Activated CD8-positive, alpha-beta T cell treated with anti-CD3 and anti-CD28 coated beads, Interleukin-2, amount 10 ng/mL, durations not matched to agents 7 days and 5 days (primary cell): ENCODE measurements at regions of chr5 and their contacts with region 1.

Region 1: GRCh38 chr5:150161242-150162141 is 5.1 kb upstream of the CDX1 start:
- DNase-seq: peak; percentile 90
- ATAC-seq: peak; percentile 94
- H3K4me3 Mint-ChIP-seq: no peak overlapping the region
- H3K27ac Mint-ChIP-seq: no peak overlapping the region
- H3K4me1 Mint-ChIP-seq: peaks cover 12% of the 10 kb centered on the region
- H3K27me3 Mint-ChIP-seq: peaks cover 16% of the 10 kb centered on the region

Region 2: GRCh38 chr5:150209020-150209635 is 47.6 kb after region 1 on chr5:
- CTCF ChIA-PET with region 1: interaction called, 23 read pairs
- POLR2A ChIA-PET with region 1: no interaction called
- DNase-seq: peak; percentile 78
- ATAC-seq: peak; percentile 74
- H3K4me3 Mint-ChIP-seq: peak overlapping the region; percentile 75
- H3K27ac Mint-ChIP-seq: peak overlapping the region; percentile 66
- H3K4me1 Mint-ChIP-seq: peaks cover 62% of the 10 kb centered on the region
- H3K27me3 Mint-ChIP-seq: peaks cover 29% of the 10 kb centered on the region

Region 3: DNA sequence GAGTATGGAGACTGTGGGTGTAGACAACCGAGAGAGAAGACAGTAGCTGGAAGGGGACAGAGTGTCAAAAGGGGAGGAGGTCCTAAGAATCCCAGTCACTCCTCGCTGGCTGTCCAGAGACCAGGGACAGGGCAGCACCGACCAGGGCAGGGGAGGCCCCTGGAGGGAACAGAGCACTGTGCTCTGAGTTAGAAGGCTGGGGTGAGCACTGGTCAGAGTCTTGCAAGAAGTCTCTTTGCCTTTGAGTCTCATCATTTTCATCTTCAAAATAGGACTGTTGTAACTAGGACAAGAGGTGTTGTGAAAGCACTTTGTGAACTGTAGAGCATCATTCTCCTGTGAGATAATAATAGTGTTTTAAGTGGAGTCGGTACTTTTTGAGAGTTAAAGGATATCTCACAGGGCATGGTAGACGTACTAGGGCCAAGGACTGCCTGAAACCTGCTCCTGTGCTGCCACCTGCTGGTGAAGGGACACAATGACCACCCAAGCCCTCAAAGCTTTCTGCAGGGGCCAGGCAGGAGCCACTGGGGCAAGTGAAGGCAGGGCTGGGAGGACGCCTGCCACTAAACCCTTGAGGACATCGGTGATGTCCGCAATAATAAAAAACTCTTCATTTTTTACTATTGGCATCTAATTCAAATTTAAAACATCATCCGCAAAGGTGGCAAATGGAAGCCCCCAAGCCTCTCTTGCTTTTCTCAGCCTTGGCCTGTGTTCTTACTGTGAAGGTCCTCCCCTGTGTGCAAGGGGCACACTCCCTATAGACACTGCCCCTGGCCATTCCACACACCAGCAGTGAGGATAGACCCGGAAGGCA is 56.6 kb after region 1 on chr5:
- CTCF ChIA-PET with region 1: interaction called, 14 read pairs
- POLR2A ChIA-PET with region 1: interaction called, 3 read pairs
- DNase-seq: peak; percentile 91
- ATAC-seq: peak; percentile 96
- H3K4me3 Mint-ChIP-seq: no peak overlapping the region
- H3K27ac Mint-ChIP-seq: no peak overlapping the region
- H3K4me1 Mint-ChIP-seq: peaks cover 10% of the 10 kb centered on the region
- H3K27me3 Mint-ChIP-seq: peaks cover 25% of the 10 kb centered on the region